Right ventricle myocardium inferior (tissue), 1 donor: ENCODE measurements at regions of chr15 and their contacts with region 1.

Region 1: GRCh38 chr15:98226578-98226977 is 266.1 kb downstream of the ARRDC4 start:
- DNase-seq: no peak
- ATAC-seq: no peak

Region 2: DNA sequence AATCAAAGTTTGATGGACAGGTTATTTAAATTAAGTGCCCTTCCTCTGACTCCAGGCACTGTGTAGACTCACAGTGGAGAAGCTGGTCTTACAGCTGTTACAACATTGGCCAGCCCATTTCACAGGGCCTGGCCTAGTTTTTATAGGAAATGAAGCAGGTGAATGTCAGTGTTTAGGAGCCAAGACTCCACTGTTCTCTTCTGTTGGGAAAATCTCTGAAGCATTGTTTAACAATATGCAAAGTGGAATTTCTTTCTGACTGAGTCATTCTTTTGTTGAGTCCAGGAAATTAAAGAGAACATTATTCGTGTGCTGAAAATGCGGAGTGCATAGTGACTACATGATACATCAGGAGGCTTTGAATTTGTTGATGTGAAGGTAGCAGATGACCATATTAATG is 201.3 kb before region 1 on chr15:
- intact Hi-C with region 1: no loop called
- DNase-seq: no peak
- ATAC-seq: no peak

Region 3: GRCh38 chr15:98286831-98287230 is 60.3 kb after region 1 on chr15:
- intact Hi-C with region 1: loop called (anchors 10 kb)
- DNase-seq: no peak
- ATAC-seq: no peak